Activated T-helper 1 cell treated with anti-CD3 and anti-CD28 coated beads, Interleukin-12 subunit alpha, Interleukin-12 subunit beta, Interleukin-2, Interleukin-4 antibody, amounts not matched to agents 30 ng/mL and 10 ng/mL and 1 ng/mL, durations not matched to agents 14 hours and 24 hours and 36 hours (primary cell): ENCODE measurements at regions of chr1 and their contacts with region 1.

Region 1: GRCh38 chr1:51768971-51769588 is 109.4 kb downstream of the NRDC start:
- DNase-seq: no peak
- H3K4me3 Mint-ChIP-seq: no peak overlapping the region
- H3K27ac Mint-ChIP-seq: no peak overlapping the region
- H3K4me1 Mint-ChIP-seq: peaks cover 8% of the 10 kb centered on the region
- H3K27me3 Mint-ChIP-seq: no peaks in the 10 kb centered on the region

Region 2: GRCh38 chr1:51445351-51446090 is 323.6 kb before region 1 on chr1:
- intact Hi-C with region 1: loop called (anchors 10 kb)
- DNase-seq: no peak
- H3K4me3 Mint-ChIP-seq: no peak overlapping the region
- H3K27ac Mint-ChIP-seq: no peak overlapping the region
- H3K4me1 Mint-ChIP-seq: peaks cover 30% of the 10 kb centered on the region
- H3K27me3 Mint-ChIP-seq: no peaks in the 10 kb centered on the region

Region 3: DNA sequence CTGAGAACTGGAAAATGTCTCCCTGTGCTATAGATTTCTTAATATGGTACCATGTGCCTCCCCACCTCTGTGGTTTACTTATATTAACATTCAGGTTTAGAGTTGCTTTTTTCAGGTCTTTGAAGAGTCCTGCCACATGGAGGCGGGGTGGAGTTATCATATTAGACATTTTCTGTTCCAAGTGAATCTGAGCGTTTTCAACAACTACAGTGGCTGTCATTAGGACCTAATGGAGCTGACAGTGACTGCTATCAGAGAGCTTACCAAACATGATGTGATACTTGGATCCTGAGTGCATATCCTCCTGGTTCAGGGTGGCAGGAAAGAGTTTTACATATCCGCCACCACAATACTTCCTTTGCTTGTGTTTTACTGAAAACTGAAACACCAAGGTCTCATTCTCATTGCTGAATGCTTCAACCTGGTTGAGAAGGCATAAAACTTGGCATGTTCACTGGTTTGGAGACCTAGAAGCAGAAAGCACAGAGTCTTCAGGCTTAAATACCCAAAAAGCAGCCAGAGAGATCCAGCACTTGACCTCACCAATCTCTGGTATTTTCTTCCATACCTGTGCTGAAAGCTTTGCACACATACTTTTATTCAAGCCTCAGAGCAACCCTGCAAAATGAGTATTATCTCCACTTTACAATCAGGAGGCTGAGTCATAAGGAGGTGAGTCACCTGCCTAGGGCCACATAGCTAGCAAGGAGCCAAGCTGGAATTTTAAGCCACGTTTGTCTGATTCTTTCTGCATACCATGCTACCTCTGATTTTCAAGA is 199.6 kb before region 1 on chr1:
- intact Hi-C with region 1: loop called (anchors 5 kb)
- DNase-seq: peak; percentile 29
- H3K4me3 Mint-ChIP-seq: peak overlapping the region; percentile 38
- H3K27ac Mint-ChIP-seq: peak overlapping the region; percentile 90
- H3K4me1 Mint-ChIP-seq: no peaks in the 10 kb centered on the region
- H3K27me3 Mint-ChIP-seq: no peaks in the 10 kb centered on the region

Region 4: GRCh38 chr1:51583532-51583931 is 185.5 kb before region 1 on chr1:
- intact Hi-C with region 1: no loop called
- DNase-seq: no peak
- H3K4me3 Mint-ChIP-seq: no peak overlapping the region
- H3K27ac Mint-ChIP-seq: no peak overlapping the region
- H3K4me1 Mint-ChIP-seq: peaks cover 8% of the 10 kb centered on the region
- H3K27me3 Mint-ChIP-seq: no peaks in the 10 kb centered on the region

Region 5: DNA sequence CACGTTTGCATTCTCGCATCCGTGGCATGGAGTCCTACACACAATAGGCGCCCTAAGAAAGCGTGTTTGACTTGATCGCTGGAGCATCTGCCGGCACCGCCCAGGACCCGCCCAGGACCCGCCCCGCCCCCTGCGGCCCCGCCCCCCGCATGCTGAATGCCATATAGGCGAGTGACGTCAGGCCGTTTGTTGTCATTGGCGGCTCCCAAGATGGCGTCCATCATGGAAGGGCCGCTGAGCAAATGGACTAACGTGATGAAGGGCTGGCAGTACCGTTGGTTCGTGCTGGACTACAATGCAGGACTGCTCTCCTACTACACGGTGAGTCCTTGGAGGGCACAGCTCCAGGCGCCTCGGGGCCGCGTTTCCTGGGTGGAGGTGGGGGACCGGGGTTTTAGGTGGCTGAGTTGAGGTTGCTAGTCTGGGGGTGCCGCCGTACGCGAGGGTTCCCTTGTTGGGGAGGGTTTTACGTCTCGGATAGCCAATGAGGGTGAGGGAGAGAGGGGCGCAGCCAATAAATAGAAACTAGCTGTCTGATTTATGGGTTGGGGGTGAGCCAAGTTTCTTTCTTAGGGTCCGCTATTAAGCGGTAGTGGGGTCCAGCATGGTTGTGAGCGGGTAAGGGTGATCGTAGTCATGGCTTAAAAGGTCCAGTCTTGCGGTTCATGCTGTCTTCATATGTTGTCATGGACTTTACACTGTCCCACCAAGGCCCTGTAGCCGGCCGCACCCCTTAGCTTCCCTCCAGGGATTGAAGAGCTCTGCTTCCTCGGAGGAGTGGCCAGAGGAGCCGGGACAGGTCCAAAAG is 152.0 kb before region 1 on chr1 and contains the start of gene OSBPL9:
- intact Hi-C with region 1: loop called (anchors 2 kb)
- DNase-seq: peak; percentile 79
- H3K4me3 Mint-ChIP-seq: peak within 1 kb of the TSS; percentile 100
- H3K27ac Mint-ChIP-seq: peak within 1 kb of the TSS; percentile 98
- H3K4me1 Mint-ChIP-seq: peaks cover 22% of the 10 kb centered on the region
- H3K27me3 Mint-ChIP-seq: peaks cover 5% of the 10 kb centered on the region
- total RNA-seq, gene OSBPL9: 48.1 and 48.8 TPM in 2 replicates

Region 6: DNA sequence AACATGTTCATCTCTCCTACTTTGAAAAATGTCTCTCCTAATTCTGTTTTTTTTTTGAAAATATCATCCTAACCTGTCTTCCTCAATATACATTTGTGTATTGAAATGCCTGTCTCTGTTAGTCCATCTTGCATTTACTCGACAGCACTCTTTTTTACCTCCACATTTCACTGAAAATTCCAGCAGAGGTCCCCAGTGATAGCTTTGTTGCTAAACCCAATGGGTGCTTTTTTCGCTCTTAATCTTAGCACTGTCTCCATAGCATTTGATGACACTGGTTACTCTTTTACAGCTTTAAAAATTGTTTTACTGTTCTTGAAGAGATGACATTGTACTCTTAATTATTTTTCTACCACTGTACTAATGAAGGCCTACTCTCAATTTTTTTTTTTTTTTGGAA is 141.4 kb before region 1 on chr1:
- intact Hi-C with region 1: loop called (anchors 1 kb)
- DNase-seq: no peak
- H3K4me3 Mint-ChIP-seq: no peak overlapping the region
- H3K27ac Mint-ChIP-seq: no peak overlapping the region
- H3K4me1 Mint-ChIP-seq: peaks cover 5% of the 10 kb centered on the region
- H3K27me3 Mint-ChIP-seq: no peaks in the 10 kb centered on the region

Region 7: DNA sequence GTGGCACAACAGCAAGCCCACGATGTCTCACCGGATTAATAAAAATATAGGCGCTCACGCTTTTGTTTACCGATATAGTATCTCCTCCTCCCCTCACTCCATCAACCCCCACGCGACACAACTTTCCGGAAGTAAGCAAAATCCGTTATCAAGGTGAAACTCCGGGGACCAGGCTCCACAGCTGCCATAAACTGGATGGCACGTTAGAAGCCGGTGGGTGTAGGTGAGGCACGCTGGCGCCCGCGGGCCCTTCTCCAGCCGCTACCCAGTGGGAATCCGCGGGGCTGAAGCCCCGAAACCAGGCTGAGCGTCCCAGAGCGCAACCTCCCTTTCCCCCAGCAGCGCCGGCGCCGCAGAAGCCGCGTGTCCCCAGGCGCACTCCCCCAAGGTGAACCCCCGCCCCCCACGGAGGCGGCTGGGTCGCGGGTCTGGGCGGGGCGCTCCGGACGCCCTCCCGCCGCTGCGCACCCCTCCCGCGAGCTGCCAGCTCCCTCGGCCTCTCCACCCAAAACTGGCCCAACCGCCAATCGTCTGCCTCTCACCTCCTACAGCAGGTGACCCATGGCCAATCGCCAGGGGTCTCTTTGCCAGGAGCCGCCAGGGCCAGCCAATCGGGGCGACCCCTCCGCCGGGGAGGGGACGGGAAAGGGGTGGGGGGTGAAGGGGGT is 39.8 kb before region 1 on chr1:
- intact Hi-C with region 1: loop called (anchors 5 kb)
- DNase-seq: peak; percentile 94
- H3K4me3 Mint-ChIP-seq: peak overlapping the region; percentile 84
- H3K27ac Mint-ChIP-seq: peak overlapping the region; percentile 88
- H3K4me1 Mint-ChIP-seq: peaks cover 24% of the 10 kb centered on the region
- H3K27me3 Mint-ChIP-seq: no peaks in the 10 kb centered on the region

Region 8: DNA sequence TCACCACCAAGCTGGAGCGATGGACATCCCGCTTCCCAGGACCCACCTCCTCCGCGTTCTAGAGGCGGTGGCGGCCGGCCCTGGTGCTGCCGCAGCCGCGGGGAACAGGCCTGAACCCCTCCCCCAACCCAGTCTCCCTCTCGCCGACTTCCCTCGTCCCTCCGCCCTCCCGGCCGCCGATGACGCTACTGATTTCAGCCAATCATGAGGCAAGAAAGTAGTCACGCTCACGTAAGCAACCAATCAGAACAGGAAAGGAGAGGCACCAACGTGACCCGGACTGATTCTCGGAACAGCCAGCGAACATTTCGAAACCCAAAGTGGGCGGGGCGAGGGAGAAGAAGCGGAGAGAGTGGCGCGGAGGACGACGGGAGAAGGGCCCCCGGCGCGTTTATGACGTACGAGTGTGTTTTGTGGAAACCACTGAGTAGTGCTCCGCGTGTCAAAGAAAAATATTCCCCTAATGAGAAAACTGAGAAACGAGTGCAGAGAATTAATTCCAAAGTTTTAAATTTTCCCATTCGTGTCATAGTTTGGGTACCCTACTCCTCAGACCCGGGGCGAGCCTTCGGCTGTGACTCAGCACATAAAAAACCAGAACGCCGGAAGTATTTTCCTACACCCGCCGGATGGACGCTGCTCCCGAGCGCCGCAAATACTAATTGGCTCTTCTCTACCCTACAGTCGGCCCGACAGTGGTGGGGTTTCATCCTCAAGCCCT is 109.7 kb after region 1 on chr1 and contains the start of gene NRDC:
- intact Hi-C with region 1: no loop called
- DNase-seq: peak; percentile 99
- H3K4me3 Mint-ChIP-seq: no peak within 1 kb of the TSS
- H3K27ac Mint-ChIP-seq: no peak within 1 kb of the TSS
- H3K4me1 Mint-ChIP-seq: no peaks in the 10 kb centered on the region
- H3K27me3 Mint-ChIP-seq: peaks cover 14% of the 10 kb centered on the region
- total RNA-seq, gene NRDC: 177 and 185 TPM in 2 replicates